HepG2 (cell line): ENCODE measurements at regions of chr7 and their contacts with region 1.

Region 1: GRCh38 chr7:67854221-67855178 is 857.9 kb downstream of the TYW1 start:
- DNase-seq: peak; percentile 11
- ATAC-seq: peak; percentile 82
- H3K4me3 ChIP-seq: no peak overlapping the region
- H3K27ac ChIP-seq: no peak overlapping the region
- H3K4me1 ChIP-seq: peaks cover 11% of the 10 kb centered on the region
- H3K27me3 ChIP-seq: no peaks in the 10 kb centered on the region
- CTCF ChIP-seq: no peak
- EP300 ChIP-seq: no peak
- POLR2A ChIP-seq: no peak
- RAD21 ChIP-seq: no peak

Region 2: DNA sequence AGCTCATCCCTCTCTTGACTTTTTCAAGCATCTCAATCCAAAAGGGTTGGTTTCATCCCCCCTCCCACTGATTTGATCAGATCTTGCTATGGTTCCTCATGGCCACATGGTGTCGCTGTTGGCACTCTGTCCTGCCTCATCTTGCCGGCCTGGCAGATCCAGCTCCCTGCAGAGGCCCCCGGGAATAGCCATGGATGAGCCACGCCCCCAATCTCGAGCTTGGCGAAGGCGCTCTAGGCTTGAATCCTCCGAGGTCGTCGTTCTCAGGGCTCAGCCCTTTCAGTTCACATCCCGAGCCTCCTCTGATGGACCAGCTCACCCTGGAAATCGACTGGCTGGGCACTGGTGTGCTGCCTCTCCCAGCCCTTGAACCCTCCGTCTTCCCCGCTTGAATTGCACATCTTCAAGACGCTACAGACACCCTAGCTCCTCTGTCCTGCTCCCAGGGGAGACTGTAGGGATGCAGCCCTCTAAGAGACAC is 229.2 kb before region 1 on chr7:
- CTCF ChIA-PET with region 1: no interaction called
- POLR2A ChIA-PET with region 1: no interaction called
- in situ Hi-C with region 1: no loop called
- intact Hi-C with region 1: loop called (anchors 10 kb)
- DNase-seq: peak; percentile 51
- ATAC-seq: peak; percentile 88
- H3K4me3 ChIP-seq: no peak overlapping the region
- H3K27ac ChIP-seq: no peak overlapping the region
- H3K4me1 ChIP-seq: no peaks in the 10 kb centered on the region
- H3K27me3 ChIP-seq: no peaks in the 10 kb centered on the region; a peak in 1 of 5 replicates
- CTCF ChIP-seq: peak; percentile 90
- EP300 ChIP-seq: no peak
- POLR2A ChIP-seq: no peak
- RAD21 ChIP-seq: peak; percentile 81